ENCODE measurements at regions of chr10 and their contacts with region 1.

Region 1: GRCh38 chr10:48363617-48364355 is 57.3 kb downstream of the MAPK8 start:
- H3K4me3 Mint-ChIP-seq: no peak overlapping the region
- H3K27ac Mint-ChIP-seq: no peak overlapping the region
- H3K4me1 Mint-ChIP-seq: peaks cover 24% of the 10 kb centered on the region
- H3K27me3 Mint-ChIP-seq: no peaks in the 10 kb centered on the region

Region 2: DNA sequence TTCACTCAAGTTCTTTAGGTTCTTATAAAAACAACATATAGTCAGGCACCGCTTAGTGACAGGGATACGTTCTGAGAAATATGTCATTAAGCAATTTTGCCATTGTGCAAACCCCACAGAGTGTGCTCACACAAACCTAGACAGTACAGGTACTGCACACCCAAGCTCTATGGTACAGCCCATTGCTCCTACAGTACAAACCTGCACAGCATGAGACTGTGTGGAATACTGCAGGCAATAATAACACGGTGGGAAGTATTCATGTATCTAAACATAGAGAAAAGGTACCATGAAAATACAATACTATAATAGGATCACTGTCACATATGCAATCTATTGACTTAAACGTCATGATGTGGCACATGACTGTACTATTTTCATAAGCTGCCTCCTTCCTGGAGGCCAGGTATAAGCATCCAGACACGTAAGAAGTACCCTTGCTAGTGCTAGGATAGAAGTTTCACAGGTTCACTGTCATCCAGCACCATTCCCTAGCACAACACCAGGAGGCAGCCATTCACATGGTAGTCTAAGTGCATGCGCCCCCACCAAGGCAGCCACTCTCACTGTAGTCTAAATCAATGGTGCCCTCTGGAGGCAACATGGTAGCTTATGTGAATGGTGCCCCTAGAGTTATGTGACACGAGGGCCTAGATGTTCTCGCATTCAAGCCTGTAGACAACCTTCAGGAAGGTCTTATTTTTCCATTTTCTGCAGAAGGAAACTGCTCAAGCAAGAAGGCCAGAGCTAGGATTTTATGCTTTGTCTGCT is 142.5 kb after region 1 on chr10:
- intact Hi-C with region 1: loop called (anchors 2 kb)
- H3K4me3 Mint-ChIP-seq: no peak overlapping the region
- H3K27ac Mint-ChIP-seq: peak overlapping the region; percentile 81
- H3K4me1 Mint-ChIP-seq: peaks cover 97% of the 10 kb centered on the region
- H3K27me3 Mint-ChIP-seq: peaks cover 11% of the 10 kb centered on the region

Region 3: DNA sequence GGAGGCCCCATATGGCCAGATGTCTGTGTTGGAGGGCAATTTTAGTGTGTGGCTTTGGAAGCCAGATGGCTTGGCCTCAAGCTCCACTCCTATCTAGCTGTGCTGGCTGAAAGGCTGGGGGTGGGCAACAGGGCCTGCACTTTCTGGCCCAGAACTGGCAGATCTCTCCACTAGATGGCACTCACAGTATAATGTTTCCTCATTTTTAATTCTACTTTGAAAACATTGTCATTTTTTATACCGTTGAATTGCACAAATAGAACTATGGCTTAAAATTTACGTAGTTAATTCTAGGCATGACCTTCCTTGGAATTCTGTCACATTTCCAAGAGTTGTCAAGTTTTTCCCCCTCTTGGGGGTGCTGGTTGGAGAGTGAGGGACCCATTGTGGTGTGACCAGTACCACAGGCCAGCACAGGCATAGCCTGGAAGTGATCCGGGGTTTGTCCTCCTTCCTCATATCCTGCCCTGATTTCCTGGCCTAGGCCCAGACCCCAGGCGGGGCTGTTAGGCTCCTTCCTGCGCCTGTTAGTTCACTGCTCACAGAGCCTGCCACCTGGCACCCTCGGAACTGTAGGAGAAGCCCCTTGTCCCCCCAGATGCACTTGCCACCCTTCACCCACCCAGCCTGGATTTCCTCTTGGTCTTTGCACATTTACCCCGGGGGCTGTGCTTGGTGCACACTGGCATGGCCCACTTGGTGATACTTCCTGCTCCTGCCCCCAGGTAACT is 188.2 kb after region 1 on chr10:
- intact Hi-C with region 1: loop called (anchors 5 kb)
- H3K4me3 Mint-ChIP-seq: no peak overlapping the region
- H3K27ac Mint-ChIP-seq: peak overlapping the region; percentile 47
- H3K4me1 Mint-ChIP-seq: peaks cover 29% of the 10 kb centered on the region
- H3K27me3 Mint-ChIP-seq: peaks cover 10% of the 10 kb centered on the region

Region 4: DNA sequence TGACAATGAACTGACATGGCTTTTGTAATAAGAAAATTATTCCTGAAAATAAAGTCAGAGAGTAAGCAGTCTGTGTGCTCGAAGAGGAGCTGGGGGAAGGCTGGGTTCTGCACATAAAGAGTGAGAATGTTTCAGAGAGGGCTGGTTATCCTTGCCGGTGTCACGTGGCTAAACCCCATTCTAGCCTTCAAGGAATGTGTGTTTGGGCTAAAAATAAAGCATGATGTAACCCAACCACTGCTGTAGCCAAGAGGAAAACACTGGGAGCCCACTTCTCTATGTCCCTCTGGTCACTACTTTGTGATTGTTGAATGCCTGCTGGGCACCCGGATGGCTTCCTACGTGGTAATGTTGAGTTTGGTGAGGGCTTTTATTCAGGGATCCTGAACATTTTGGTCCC is 344.4 kb after region 1 on chr10:
- intact Hi-C with region 1: loop called (anchors 10 kb)
- H3K4me3 Mint-ChIP-seq: no peak overlapping the region
- H3K27ac Mint-ChIP-seq: peak overlapping the region; percentile 78
- H3K4me1 Mint-ChIP-seq: peaks cover 88% of the 10 kb centered on the region
- H3K27me3 Mint-ChIP-seq: no peaks in the 10 kb centered on the region